Head of caudate nucleus (tissue), 42 donors: ENCODE measurements at regions of chr17 and their contacts with region 1.

Region 1: GRCh38 chr17:4948931-4949320 is 596 bp upstream of the PFN1 start:
- DNase-seq: peak in 41 of 42 donors; percentile 32 to 90 (median 80)

Region 2: DNA sequence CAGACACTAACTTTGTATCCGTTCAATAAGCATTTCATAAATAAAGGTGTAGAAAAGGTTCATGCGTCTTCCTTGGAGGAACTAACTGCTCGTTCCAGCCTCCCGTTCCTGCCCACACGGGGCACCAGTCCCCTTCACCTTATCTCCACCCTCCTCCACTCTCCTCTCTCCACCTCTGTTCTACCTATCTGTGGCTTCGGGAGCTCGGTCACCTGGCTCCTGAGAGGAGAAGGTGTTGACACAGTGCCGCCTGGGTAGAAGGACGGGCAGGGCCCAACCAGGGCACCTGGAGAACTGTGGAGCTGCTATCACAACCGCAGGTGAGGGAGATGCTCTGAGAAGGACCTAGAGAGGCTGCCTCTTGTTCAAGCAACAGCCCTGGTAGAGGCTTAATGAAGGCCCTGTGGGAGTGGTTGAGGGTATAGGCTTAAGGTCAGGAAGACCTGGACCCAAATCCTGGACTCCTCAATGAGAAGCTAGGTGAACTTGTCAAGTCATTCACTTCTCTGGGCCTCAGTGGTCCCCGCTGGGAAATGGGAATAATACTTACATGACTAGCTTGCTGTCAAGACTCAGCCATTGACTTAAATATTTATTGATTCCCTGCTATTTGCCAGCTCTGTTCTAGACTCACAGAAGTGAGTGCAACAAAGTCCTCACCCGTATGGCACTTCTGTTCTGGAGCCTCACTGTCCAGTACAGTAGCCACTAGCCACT is 125.4 kb before region 1 on chr17:
- intact Hi-C with region 1: no loop called
- DNase-seq: no peak

Region 3: DNA sequence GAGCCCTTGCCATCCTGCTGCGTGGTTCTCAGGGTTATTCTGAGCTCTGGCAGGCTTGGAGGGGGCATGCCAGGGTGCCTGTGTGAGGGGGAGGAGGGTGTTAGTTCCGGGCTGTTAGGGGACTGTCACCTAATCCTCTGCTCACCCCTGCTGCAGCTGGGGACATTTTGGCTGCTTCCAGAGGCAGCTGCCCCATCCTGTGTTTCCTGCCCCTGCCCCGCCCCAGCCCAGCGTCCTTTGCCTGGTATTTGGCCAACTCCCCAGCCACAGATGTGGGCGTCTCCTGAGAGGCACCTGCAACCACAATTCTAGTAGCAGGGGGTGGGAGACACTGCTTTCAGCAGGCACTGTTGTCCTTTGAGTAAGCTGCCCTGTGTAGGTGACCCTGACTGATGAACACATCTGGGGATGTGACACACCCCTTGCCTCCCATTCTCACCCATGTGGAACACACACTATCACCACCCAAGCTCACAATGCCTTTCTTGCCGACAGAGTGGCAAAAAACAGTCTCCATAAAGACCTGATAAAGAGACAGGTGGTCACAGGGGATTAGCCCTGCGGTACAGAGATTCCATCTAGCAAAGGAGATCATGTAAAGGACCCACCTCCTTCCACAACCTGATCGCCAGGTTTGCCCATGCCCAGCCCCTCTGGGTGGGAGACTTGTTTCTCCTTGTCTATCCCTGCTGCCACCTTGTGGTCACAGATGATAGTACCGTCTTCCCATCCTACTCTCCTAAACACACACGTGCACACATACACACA is 45.7 kb before region 1 on chr17 and contains the start of gene CHRNE:
- intact Hi-C with region 1: no loop called
- DNase-seq: peak; percentile 29 to 95 (median 82)

Region 4: GRCh38 chr17:4966844-4967538 is 18.1 kb after region 1 on chr17:
- intact Hi-C with region 1: loop called (anchors 2 kb)
- DNase-seq: peak; percentile 96 to 100 (median 99)

Region 5: DNA sequence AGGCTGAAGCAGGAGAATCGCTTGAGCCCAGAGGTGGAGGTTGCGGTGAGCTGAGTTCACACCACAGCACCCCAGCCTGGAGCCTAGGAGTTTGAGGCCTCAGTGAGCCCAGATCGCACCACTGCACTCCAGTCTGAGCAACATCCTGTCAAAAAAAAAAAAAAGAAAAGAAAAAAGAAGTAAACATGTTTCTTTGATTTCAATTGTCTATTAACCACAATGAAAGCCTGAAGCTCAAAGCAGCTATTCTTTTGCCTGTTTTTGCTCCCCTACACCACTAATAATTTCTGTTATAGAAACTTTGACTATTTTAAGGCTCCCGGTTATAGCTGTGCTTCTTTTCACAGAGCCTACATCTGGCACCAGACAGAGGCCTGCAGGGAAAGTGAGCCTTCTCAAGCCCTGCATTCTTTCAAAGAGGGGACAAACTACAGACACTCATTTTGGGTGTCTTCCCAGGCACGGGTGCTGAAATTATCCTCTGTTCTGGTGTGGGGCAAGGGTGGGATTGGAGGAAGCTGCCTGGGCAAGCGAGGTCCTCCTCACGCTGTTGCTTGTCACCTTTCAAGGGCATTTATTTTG is 100.5 kb after region 1 on chr17:
- intact Hi-C with region 1: no loop called
- DNase-seq: no peak